Activated B cell treated with CpG ODN at 0.5 μM for 24 hours (primary cell): ENCODE measurements at regions of chr1 and their contacts with region 1.

Region 1: DNA sequence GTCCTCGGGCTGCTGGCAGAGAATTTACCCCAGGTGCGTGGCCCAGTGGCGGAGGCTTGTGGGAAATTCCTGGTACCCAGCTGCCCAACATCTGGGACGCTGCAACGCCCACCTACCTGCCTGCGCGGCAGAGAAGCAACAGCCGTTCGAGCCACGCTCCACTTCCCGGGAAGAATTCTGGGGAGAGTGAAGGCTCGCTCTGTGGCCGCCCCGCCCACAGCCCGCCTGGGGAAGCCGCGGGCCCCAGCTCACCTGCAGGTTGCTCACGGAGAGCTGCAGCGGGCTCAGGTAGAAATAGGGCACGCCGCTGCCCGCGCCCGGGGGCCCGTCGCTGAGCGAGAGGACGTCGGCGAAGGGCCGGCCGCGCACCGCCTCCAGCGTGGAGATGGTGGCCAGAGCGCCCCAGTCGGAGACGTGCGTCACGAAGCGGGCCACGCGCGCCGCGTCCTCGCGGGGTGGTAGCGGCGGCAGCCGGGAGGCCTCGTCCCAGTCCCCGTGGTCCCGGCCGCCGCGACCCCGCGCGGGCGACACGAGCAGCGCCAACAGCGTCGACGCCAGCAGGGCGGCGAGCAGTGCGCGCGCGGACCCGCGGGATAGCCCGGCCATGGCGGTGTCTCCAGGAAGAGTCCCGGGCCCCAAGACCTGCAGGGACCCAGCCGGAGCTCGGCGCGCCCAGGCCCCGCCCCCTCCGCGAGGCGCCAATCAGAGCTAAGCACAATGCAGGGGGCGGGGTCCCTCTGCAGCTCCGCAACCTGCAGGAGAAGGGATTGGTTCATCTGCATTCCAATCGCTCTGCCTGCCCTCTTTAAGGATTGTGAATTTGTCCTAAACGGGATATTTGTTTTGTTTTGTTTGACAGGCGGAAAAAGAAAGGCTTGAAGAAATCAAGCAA is at the start of gene CREG1:
- DNase-seq: peak; percentile 84
- ATAC-seq: peak; percentile 99
- H3K4me3 Mint-ChIP-seq: peak within 1 kb of the TSS; percentile 86
- H3K27ac Mint-ChIP-seq: peak within 1 kb of the TSS; percentile 41
- H3K4me1 Mint-ChIP-seq: peaks cover 19% of the 10 kb centered on the region
- H3K27me3 Mint-ChIP-seq: no peaks in the 10 kb centered on the region
- CTCF ChIP-seq: no peak
- total RNA-seq, gene CREG1: 3.1 and 3.8 TPM in 2 replicates

Region 2: DNA sequence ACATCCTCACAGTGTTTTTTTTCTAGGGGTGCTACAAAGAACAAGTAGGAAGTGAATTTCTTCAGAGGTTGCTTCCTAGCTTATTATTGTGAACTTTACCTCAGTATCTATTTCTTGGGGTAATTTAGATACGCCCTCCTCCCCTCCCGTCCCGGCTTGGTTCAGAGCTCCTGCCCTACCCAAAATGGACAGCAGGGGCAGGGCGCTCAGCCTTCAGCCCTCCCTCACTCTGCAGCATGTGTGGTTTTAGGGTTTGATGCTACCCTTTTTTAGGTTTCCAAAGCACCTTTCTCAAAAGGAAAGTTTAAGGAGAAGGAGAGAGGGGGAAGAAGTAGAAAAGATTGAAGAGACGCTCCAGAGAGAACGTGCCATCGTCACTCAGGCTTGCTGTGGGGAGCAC is 731.0 kb before region 1 on chr1:
- CTCF ChIA-PET with region 1: no interaction called
- POLR2A ChIA-PET with region 1: no interaction called
- intact Hi-C with region 1: no loop called
- DNase-seq: no peak
- ATAC-seq: no peak
- H3K4me3 Mint-ChIP-seq: no peak overlapping the region
- H3K27ac Mint-ChIP-seq: no peak overlapping the region
- H3K4me1 Mint-ChIP-seq: no peaks in the 10 kb centered on the region
- H3K27me3 Mint-ChIP-seq: peaks cover 10% of the 10 kb centered on the region
- CTCF ChIP-seq: no peak

Region 3: GRCh38 chr1:167003711-167004110 is 549.7 kb before region 1 on chr1:
- CTCF ChIA-PET with region 1: no interaction called
- POLR2A ChIA-PET with region 1: no interaction called
- intact Hi-C with region 1: no loop called
- DNase-seq: no peak
- ATAC-seq: no peak
- H3K4me3 Mint-ChIP-seq: no peak overlapping the region
- H3K27ac Mint-ChIP-seq: no peak overlapping the region
- H3K4me1 Mint-ChIP-seq: no peaks in the 10 kb centered on the region
- H3K27me3 Mint-ChIP-seq: peaks cover 6% of the 10 kb centered on the region
- CTCF ChIP-seq: no peak

Region 4: GRCh38 chr1:167564612-167565270 is 11.4 kb after region 1 on chr1:
- CTCF ChIA-PET with region 1: interaction called, 10 read pairs
- POLR2A ChIA-PET with region 1: no interaction called
- intact Hi-C with region 1: no loop called
- DNase-seq: no peak
- ATAC-seq: no peak
- H3K4me3 Mint-ChIP-seq: no peak overlapping the region
- H3K27ac Mint-ChIP-seq: no peak overlapping the region
- H3K4me1 Mint-ChIP-seq: peaks cover 15% of the 10 kb centered on the region
- H3K27me3 Mint-ChIP-seq: no peaks in the 10 kb centered on the region
- CTCF ChIP-seq: no peak

Region 5: DNA sequence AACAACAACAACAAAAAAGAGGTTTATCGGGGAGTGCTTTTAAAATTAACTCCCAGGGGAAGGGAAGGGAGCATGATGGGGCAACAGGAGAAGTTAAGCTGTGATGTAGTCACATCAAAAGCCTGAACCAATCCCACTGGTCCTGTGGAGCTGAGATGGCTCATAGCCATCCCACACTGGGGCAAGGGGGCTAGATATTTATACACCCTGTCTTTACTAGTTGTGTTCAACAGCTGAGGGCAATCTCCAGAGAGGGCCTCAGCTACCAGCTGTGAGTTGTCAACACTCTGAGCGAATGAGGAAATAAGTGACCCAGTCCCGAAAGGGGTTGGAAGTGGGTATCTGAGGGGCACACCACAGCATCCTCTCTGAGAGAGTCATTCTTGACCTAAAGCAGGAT is 31.2 kb after region 1 on chr1:
- CTCF ChIA-PET with region 1: no interaction called
- POLR2A ChIA-PET with region 1: no interaction called
- intact Hi-C with region 1: no loop called
- DNase-seq: no peak
- ATAC-seq: no peak
- H3K4me3 Mint-ChIP-seq: no peak overlapping the region
- H3K27ac Mint-ChIP-seq: no peak overlapping the region
- H3K4me1 Mint-ChIP-seq: peaks cover 13% of the 10 kb centered on the region
- H3K27me3 Mint-ChIP-seq: no peaks in the 10 kb centered on the region
- CTCF ChIP-seq: no peak

Region 6: DNA sequence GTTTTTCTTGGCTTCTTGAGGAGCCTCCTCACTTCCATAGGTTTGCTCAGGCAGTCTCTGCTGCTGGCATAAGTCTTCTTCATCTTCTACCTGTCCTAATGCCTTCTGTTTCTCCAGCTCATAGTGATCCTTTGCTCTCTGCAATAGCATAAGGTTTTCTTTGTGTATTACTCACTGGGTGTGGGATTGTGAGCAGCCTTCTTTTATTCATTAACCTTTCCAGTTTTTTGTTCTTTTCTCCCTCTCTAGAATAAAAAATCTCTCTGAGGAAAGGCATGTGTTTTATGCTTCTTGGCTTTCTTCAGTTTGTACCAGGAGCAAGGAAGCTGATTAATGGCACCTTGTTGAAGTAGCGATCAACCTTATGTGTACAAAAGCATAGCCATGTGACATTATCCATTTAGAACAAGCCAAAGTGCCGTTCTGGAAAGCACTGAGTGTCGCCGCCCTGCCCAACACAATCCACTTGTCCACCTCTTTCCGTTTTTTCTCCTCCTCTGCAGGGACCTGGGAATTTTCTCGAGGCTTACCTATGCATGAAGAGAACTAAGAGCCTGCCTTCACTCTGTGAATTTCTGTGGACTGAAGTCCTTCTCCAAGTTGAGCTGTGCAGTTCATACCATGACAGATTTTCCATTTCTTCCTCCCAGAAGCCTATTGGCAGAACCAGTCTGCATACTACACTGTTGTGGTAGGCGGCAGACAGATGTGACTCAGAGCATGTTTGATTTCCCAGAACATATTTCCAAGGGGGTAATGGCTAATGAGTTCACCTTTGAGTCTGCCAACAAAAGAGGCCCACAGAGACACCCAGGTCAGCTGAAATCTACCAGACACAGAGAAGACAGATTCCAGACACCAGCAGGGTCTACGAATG is 1136.6 kb after region 1 on chr1:
- CTCF ChIA-PET with region 1: no interaction called
- POLR2A ChIA-PET with region 1: no interaction called
- intact Hi-C with region 1: no loop called
- DNase-seq: no peak
- ATAC-seq: no peak
- H3K4me3 Mint-ChIP-seq: no peak overlapping the region
- H3K27ac Mint-ChIP-seq: no peak overlapping the region
- H3K4me1 Mint-ChIP-seq: no peaks in the 10 kb centered on the region
- H3K27me3 Mint-ChIP-seq: peaks cover 8% of the 10 kb centered on the region
- CTCF ChIP-seq: no peak